Naive thymus-derived CD4-positive, alpha-beta T cell (primary cell): ENCODE measurements at regions of chr14 and their contacts with region 1.

Region 1: GRCh38 chr14:56339855-56340701 is 221.9 kb downstream of the PELI2 start:
- DNase-seq: peak; percentile 14 to 57 (median 46)
- ATAC-seq: peak; percentile 91
- H3K4me3 ChIP-seq: no peak overlapping the region
- H3K4me3 Mint-ChIP-seq: peak overlapping the region in 1 of 10 donors; percentile 20
- H3K27ac ChIP-seq: no peak overlapping the region
- H3K27ac Mint-ChIP-seq: peak overlapping the region in 1 of 9 donors; percentile 16
- H3K4me1 ChIP-seq: no peaks in the 10 kb centered on the region
- H3K4me1 Mint-ChIP-seq: peaks cover 0 to 14% (median 0%) of the 10 kb centered on the region in 7 donors
- H3K27me3 ChIP-seq: no peaks in the 10 kb centered on the region
- H3K27me3 Mint-ChIP-seq: no peaks in the 10 kb centered on the region

Region 2: DNA sequence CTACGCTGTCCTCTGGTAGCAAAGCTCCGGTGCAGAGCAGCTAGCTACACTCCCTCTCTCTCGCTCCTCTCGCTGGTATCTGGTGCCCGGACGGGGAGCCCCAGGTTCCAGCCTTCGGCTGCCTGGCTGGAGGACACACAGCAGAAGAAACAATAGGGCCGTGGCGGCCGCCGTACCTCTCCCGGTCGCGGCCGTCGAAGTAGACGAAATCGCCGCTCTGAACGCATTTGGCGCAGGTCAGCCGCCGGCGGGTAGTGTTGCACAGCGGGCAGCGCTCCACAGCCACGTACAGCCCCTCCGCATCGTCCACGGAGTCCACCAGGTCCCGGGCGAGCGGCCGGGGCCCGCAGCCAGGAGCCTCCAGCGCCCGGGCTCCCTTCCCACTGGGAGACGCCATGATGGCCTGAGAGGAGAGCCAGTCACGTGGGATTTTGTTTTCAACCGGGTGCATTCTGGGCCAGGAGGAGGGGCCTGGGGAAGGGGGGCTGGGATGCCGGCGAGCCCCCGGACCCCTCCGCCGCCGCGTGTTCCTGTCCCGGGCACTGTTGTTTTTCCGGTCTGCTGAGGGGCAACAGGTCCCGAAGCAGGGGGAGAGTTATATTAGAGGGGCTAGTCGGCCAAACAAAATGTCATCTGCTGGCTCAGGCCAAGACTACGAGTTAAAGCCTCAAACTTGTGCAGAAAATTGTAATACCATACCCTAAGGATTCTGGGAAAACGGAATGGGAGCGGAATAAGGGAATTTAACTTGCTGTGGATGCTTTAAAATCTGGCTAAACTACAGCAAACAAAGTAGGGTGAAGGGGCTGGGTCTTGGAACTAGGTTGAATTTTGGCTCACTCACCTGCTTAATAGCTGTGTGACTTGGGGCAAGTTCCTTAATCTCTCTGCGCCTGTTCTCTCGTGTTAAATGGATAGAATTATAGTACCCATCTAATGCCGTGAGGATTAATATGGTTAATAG is 928.4 kb before region 1 on chr14 and contains the start of gene ATG14:
- CTCF ChIA-PET with region 1: no interaction called
- POLR2A ChIA-PET with region 1: no interaction called
- intact Hi-C with region 1: no loop called
- DNase-seq: peak; percentile 48 to 78 (median 66)
- ATAC-seq: peak; percentile 98
- H3K4me3 ChIP-seq: peak within 1 kb of the TSS; percentile 68
- H3K4me3 Mint-ChIP-seq: peak within 1 kb of the TSS; percentile 68 to 94 (median 92)
- H3K27ac ChIP-seq: peak within 1 kb of the TSS; percentile 86
- H3K27ac Mint-ChIP-seq: peak within 1 kb of the TSS; percentile 86 to 95 (median 90)
- H3K4me1 ChIP-seq: peaks cover 11 to 16% of the 10 kb centered on the region in 2 donors
- H3K4me1 Mint-ChIP-seq: peaks cover 26 to 56% (median 39%) of the 10 kb centered on the region in 7 donors
- H3K27me3 ChIP-seq: no peaks in the 10 kb centered on the region
- H3K27me3 Mint-ChIP-seq: peaks cover 0 to 5% (median 0%) of the 10 kb centered on the region in 5 donors
- total RNA-seq, gene ATG14: 7.8 to 19.6 (median 18.8) TPM

Region 3: DNA sequence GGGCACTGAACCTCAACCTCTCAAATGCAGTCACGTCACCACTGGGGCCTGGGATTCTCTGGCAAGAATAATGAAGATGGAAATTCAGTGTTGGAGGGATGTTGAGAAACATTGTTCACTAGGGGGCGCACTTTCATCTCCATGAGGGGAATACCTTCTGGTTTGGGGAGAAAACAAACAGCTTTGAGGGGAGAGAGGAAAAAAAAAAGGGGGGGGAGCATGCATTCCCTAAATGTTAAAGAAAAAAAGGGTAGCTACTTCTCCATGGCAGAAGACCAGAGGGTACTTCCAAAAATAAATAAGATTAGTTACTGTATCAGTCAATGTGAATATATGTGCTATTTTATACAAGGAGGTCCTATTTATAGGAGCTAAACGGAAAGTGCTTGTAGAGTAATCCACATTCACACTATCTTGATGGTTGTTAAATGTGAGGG is 893.8 kb before region 1 on chr14:
- CTCF ChIA-PET with region 1: no interaction called
- POLR2A ChIA-PET with region 1: no interaction called
- intact Hi-C with region 1: loop called in 1 of 2 experiments (anchors 2 kb)
- DNase-seq: peak in 7 of 9 donors; percentile 28 to 58 (median 44)
- ATAC-seq: peak; percentile 64
- H3K4me3 ChIP-seq: no peak overlapping the region
- H3K4me3 Mint-ChIP-seq: no peak overlapping the region
- H3K27ac ChIP-seq: no peak overlapping the region
- H3K27ac Mint-ChIP-seq: no peak overlapping the region
- H3K4me1 ChIP-seq: no peaks in the 10 kb centered on the region
- H3K4me1 Mint-ChIP-seq: peaks cover 0 to 10% (median 0%) of the 10 kb centered on the region in 7 donors
- H3K27me3 ChIP-seq: no peaks in the 10 kb centered on the region
- H3K27me3 Mint-ChIP-seq: no peaks in the 10 kb centered on the region

Region 4: GRCh38 chr14:55731881-55732498 is 608.1 kb before region 1 on chr14:
- CTCF ChIA-PET with region 1: interaction called, 6 read pairs
- POLR2A ChIA-PET with region 1: no interaction called
- intact Hi-C with region 1: loop called in 1 of 2 experiments (anchors 1 kb)
- DNase-seq: peak; percentile 8 to 58 (median 33)
- ATAC-seq: peak; percentile 44
- H3K4me3 ChIP-seq: no peak overlapping the region
- H3K4me3 Mint-ChIP-seq: no peak overlapping the region
- H3K27ac ChIP-seq: no peak overlapping the region
- H3K27ac Mint-ChIP-seq: no peak overlapping the region
- H3K4me1 ChIP-seq: no peaks in the 10 kb centered on the region
- H3K4me1 Mint-ChIP-seq: peaks cover 0 to 19% (median 0%) of the 10 kb centered on the region in 7 donors
- H3K27me3 ChIP-seq: no peaks in the 10 kb centered on the region
- H3K27me3 Mint-ChIP-seq: peaks cover 0 to 16% (median 4%) of the 10 kb centered on the region in 5 donors

Region 5: GRCh38 chr14:55964091-55964490 is 376.0 kb before region 1 on chr14:
- CTCF ChIA-PET with region 1: no interaction called
- POLR2A ChIA-PET with region 1: no interaction called
- intact Hi-C with region 1: loop called in 1 of 2 experiments (anchors 5 kb)
- DNase-seq: no peak
- ATAC-seq: no peak
- H3K4me3 ChIP-seq: no peak overlapping the region
- H3K4me3 Mint-ChIP-seq: no peak overlapping the region
- H3K27ac ChIP-seq: no peak overlapping the region
- H3K27ac Mint-ChIP-seq: no peak overlapping the region
- H3K4me1 ChIP-seq: no peaks in the 10 kb centered on the region
- H3K4me1 Mint-ChIP-seq: no peaks in the 10 kb centered on the region
- H3K27me3 ChIP-seq: no peaks in the 10 kb centered on the region
- H3K27me3 Mint-ChIP-seq: peaks cover under 1 to 36% (median 15%) of the 10 kb centered on the region in 5 donors